Activated T-helper 1 cell treated with anti-CD3 and anti-CD28 coated beads, Interleukin-12 subunit alpha, Interleukin-12 subunit beta, Interleukin-2, Interleukin-4 antibody, amounts not matched to agents 30 ng/mL and 10 ng/mL and 1 ng/mL, durations not matched to agents 14 hours and 24 hours and 36 hours (primary cell): ENCODE measurements at regions of chr14 and their contacts with region 1.

Region 1: DNA sequence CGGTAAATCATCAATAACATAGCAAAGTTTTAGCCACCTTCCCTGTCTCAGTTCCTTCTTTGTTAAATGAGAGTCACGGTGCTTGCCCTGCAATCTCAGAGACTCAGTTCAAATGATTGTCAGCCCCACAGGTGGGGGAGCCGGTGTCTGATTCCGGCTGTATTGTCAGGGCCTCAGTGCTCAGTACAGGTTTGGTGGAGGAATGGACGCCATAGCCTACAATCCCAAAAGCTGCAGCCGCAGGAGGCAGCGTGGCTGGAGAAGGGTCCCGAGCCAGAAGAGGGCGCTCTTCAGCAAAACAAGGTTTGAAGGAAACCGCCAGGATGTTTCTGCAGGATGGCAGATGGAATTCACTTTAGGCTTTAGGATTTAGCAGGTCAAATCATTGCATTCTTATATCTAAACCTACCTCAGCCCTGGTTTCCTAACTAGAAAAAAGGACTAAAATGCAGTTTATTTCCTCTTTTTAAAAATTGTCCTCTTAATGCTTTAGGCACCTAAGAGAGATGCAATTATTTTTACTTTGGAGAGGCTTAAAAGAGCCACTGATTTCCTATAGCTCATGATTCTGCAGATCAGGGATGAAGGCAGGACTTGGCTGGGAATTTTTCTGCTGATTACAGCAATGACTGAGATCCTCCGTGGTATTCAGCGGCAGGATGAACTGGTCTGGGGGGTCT is 29.2 kb downstream of the FOS start:
- DNase-seq: peak; percentile 54
- H3K4me3 Mint-ChIP-seq: no peak overlapping the region
- H3K27ac Mint-ChIP-seq: no peak overlapping the region
- H3K4me1 Mint-ChIP-seq: peaks cover 18% of the 10 kb centered on the region
- H3K27me3 Mint-ChIP-seq: peaks cover 4% of the 10 kb centered on the region

Region 2: GRCh38 chr14:75002392-75003249 is 305.2 kb before region 1 on chr14 and contains the start of gene EIF2B2:
- intact Hi-C with region 1: loop called (anchors 5 kb)
- DNase-seq: peak; percentile 99
- H3K4me3 Mint-ChIP-seq: peak within 1 kb of the TSS; percentile 98
- H3K27ac Mint-ChIP-seq: peak within 1 kb of the TSS; percentile 92
- H3K4me1 Mint-ChIP-seq: peaks cover 54% of the 10 kb centered on the region
- H3K27me3 Mint-ChIP-seq: peaks cover 10% of the 10 kb centered on the region
- total RNA-seq, gene EIF2B2: 52.8 and 54.3 TPM in 2 replicates

Region 3: DNA sequence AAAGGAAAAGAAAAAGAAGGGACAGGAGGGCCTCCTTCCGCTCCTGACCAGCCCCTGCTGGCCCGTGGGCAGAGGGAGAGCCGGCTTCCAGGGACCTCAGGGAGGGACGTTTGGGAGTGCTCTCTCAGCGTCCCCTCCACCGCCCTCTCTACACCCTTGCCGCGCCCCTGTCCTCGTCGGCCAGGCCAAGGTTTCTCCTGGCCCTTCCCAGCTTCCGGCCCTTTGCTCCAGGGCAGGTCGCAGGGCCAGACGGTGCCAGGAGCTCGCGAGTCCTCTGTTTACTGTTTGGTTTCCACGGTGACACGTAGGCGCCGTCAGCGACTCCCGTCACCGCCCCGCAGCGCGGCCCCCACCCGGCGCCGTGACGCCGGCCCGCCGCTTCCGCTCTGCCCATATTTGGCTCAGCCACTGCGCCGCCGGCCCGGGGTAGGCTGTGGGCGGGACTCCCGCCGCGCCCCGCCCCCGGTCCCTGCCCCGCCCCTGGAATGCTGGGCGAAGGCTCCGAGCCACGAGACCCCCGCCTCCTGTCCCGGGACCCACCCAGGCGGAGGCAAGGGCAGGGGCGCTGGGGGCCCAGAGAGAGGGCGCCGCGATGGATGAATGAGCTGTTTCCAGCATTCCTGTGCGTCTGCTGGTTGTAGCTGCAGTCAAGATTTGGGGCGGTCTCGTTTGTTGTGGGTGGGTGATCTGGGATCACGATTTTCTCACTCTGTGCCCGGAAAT is 13.8 kb before region 1 on chr14:
- intact Hi-C with region 1: loop called (anchors 1 kb)
- DNase-seq: peak; percentile 92
- H3K4me3 Mint-ChIP-seq: peak overlapping the region; percentile 72
- H3K27ac Mint-ChIP-seq: peak overlapping the region; percentile 95
- H3K4me1 Mint-ChIP-seq: peaks cover 22% of the 10 kb centered on the region
- H3K27me3 Mint-ChIP-seq: peaks cover 26% of the 10 kb centered on the region

Region 4: DNA sequence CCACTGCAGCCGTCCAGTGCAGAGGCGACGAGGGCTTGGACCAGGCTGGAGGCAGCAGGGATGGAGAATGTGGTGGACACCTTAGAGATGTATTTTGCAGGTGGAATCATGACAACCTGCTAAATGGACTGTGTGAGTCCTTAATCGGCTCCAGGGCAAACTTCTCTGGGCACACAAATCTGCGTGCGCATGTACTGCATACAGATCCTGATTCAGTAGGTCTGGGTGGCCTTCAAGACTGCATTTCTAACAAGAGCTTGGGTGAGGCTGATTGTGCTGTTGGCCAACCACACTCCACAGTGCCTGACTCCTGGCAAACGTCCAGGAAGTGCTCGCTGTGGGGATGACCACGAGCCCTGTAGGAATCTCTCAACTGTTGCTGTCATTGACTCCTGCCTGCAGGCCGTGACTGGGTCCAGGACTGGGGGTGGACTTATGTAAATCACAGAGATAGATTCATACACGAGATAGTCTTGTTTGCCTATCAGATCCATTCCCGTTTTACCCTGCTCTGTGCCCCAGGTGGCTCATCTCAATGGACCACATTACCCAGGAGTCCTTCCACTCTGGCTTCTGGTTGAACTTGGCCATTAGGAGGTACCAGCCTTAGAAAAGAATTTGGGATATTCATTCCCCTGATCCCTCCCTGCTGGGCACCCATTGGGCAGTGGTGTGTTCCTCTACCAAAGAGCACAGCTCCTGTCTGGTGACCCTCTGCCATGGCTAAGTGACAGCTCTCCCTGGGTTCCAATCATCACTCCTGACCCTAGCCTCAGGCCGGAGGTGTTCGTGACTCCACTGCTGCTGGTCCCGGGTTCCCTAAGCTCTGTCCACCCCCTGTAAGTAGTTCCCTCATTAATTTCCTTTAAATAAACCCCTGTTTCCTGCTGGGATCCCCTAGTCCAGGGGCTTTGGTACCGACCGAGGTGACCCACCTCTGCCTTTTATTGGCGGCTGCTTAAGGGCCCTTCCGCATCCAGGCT is 147.4 kb after region 1 on chr14:
- intact Hi-C with region 1: loop called (anchors 1 kb)
- DNase-seq: no peak
- H3K4me3 Mint-ChIP-seq: no peak overlapping the region
- H3K27ac Mint-ChIP-seq: no peak overlapping the region
- H3K4me1 Mint-ChIP-seq: peaks cover 17% of the 10 kb centered on the region
- H3K27me3 Mint-ChIP-seq: no peaks in the 10 kb centered on the region

Region 5: GRCh38 chr14:75566321-75566720 is 258.5 kb after region 1 on chr14:
- intact Hi-C with region 1: loop called (anchors 1 kb)
- DNase-seq: peak; percentile 68
- H3K4me3 Mint-ChIP-seq: peak overlapping the region; percentile 66
- H3K27ac Mint-ChIP-seq: peak overlapping the region; percentile 87
- H3K4me1 Mint-ChIP-seq: peaks cover 76% of the 10 kb centered on the region
- H3K27me3 Mint-ChIP-seq: no peaks in the 10 kb centered on the region